Ovary (tissue), 10 donors: ENCODE measurements at regions of chr14 and their contacts with region 1.

Region 1: GRCh38 chr14:75011356-75011994 is 8.8 kb downstream of the EIF2B2 start:
- DNase-seq: no peak
- H3K4me3 ChIP-seq: no peak overlapping the region
- H3K27ac ChIP-seq: no peak overlapping the region
- H3K4me1 ChIP-seq: peaks cover 5% of the 10 kb centered on the region
- H3K27me3 ChIP-seq: no peaks in the 10 kb centered on the region
- CTCF ChIP-seq: no peak
- EP300 ChIP-seq: no peak
- POLR2A ChIP-seq: no peak

Region 2: DNA sequence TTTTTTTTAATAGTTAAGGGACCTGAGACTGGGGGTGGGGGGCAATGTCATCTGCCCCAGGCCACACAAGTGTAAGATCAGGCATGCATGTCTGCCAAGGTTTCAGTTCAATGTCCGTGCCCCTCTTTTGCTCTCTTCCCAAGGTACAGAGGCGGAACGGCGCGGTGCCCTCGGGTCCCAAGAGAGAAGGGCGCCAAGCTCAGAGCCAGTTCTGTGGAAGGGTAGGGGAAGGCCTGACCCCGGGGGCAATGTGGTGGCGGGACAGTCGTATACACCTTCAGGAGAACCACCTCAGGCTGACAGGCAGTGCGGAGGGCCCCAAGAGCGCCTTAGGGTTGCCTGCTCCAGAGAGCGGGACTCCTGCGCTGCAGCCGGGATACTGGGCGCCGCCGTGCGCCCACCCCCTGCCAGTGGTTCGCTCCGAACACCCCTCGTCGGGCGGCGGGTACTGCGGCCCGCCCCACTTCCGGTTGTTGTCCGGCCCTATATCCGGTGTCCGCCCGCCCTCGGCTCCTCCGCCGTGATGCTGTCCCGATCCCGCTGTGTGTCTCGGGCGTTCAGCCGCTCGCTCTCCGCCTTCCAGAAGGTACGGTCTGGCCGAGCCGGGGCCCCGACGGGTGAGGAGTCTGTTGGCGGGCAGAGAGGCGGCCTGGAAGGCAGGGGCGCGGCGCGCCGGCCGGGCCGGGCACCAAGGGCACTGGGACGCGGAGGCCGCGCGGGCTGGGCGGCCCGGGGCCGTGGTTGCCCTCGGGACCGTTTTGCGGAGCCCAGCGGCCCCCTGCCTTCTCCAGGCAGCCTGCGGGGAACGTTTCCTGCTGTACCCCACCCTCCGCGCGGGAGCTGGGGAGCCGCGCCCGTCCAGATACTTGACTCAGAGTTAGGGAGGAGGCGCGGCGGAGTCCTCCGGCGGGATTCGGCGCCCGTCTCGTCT is 129.8 kb before region 1 on chr14 and contains the start of gene DLST:
- intact Hi-C with region 1: no loop called
- DNase-seq: peak; percentile 83 to 91 (median 87)
- H3K4me3 ChIP-seq: peak within 1 kb of the TSS; percentile 100
- H3K27ac ChIP-seq: peak within 1 kb of the TSS; percentile 78 to 83
- H3K4me1 ChIP-seq: peaks cover 12% of the 10 kb centered on the region
- H3K27me3 ChIP-seq: no peaks in the 10 kb centered on the region
- CTCF ChIP-seq: no peak
- EP300 ChIP-seq: no peak
- POLR2A ChIP-seq: peak; percentile 65
- total RNA-seq, gene DLST: 41.0 to 71.5 (median 68.6) TPM

Region 3: GRCh38 chr14:74955229-74956026 is 56.0 kb before region 1 on chr14 and contains the start of gene PGF:
- intact Hi-C with region 1: loop called in 1 of 4 experiments (anchors 10 kb)
- DNase-seq: peak; percentile 52 to 79 (median 69)
- H3K4me3 ChIP-seq: peak within 1 kb of the TSS; percentile 23
- H3K27ac ChIP-seq: no peak within 1 kb of the TSS
- H3K4me1 ChIP-seq: peaks cover 4% of the 10 kb centered on the region
- H3K27me3 ChIP-seq: no peaks in the 10 kb centered on the region
- CTCF ChIP-seq: no peak
- EP300 ChIP-seq: no peak
- POLR2A ChIP-seq: no peak
- total RNA-seq, gene PGF: 1.8 to 14.0 (median 3.1) TPM in 6 of 7 donors, not detected in the other